Ovary (tissue), 10 donors: ENCODE measurements at regions of chr2 and their contacts with region 1.

Region 1: GRCh38 chr2:150520887-150521664 is 33.6 kb upstream of the RND3 start:
- DNase-seq: no peak
- H3K4me3 ChIP-seq: no peak overlapping the region
- H3K27ac ChIP-seq: no peak overlapping the region
- H3K4me1 ChIP-seq: no peaks in the 10 kb centered on the region
- H3K27me3 ChIP-seq: no peaks in the 10 kb centered on the region
- CTCF ChIP-seq: no peak
- EP300 ChIP-seq: no peak
- POLR2A ChIP-seq: no peak

Region 2: DNA sequence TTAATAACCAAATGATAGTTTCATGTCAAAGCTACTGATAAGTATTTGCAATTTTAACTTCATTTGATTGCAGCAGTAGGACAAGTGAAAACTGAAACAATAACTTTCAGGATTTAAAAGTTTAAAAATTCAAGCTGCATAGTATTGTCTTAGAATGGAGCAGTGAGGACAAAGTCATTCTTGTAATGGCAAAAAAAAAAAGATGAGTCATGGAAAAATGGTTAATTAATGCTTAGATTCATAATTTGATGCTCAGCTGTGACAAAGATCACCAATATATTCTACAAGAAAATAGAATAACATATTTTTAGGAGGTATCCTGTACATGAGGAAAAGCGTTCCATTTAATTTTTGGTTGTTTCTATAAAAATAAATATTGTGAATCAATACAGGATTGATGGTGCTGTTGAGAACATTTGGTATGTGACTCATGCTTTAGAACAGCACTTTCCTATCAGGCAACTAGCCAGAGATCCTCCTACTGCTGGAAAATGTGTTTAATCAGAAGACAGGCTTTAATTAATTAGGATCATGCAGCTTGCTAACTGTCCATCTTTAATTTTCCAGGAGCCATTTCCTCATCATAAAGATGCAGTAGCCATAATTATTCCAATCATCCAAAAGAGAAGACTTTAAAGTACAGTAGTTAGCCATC is 694.5 kb before region 1 on chr2:
- intact Hi-C with region 1: loop called in 1 of 4 experiments (anchors 5 kb)
- DNase-seq: no peak
- H3K4me3 ChIP-seq: no peak overlapping the region
- H3K27ac ChIP-seq: no peak overlapping the region
- H3K4me1 ChIP-seq: no peaks in the 10 kb centered on the region
- H3K27me3 ChIP-seq: no peaks in the 10 kb centered on the region
- CTCF ChIP-seq: no peak
- EP300 ChIP-seq: no peak
- POLR2A ChIP-seq: no peak

Region 3: DNA sequence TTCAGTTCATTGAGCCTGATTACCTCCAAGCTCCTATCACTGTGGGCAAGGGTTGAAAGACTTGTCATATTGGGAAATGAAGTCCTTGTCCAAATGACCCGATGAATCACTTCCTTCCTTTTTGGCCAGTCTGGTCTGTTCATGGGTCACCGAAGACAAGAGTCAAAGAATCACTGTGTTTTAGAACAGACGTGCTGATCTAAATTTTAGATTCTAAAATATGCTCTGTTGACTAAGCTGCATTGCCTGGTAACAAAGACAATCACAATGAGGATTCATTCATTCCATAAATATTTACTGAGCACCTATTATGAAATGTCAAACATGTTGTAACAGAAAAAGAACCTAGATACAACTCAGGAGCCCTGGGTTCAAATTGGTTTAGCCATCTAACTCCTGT is 65.8 kb after region 1 on chr2:
- intact Hi-C with region 1: no loop called
- DNase-seq: no peak
- H3K4me3 ChIP-seq: no peak overlapping the region
- H3K27ac ChIP-seq: no peak overlapping the region
- H3K4me1 ChIP-seq: no peaks in the 10 kb centered on the region
- H3K27me3 ChIP-seq: no peaks in the 10 kb centered on the region
- CTCF ChIP-seq: no peak
- EP300 ChIP-seq: no peak
- POLR2A ChIP-seq: no peak